Body of pancreas (tissue), 4 donors: ENCODE measurements at regions of chr3 and their contacts with region 1.

Region 1: GRCh38 chr3:17841190-17841828 is 98.9 kb upstream of the TBC1D5 start:
- DNase-seq: peak; percentile 63 to 76 (median 70)
- ATAC-seq: peak; percentile 83
- H3K4me3 ChIP-seq: no peak overlapping the region
- H3K27ac ChIP-seq: no peak overlapping the region
- H3K4me1 ChIP-seq: no peaks in the 10 kb centered on the region
- H3K27me3 ChIP-seq: no peaks in the 10 kb centered on the region
- CTCF ChIP-seq: peak; percentile 80 to 90 (median 87)
- POLR2A ChIP-seq: no peak

Region 2: GRCh38 chr3:17431004-17431403 is 410.3 kb before region 1 on chr3:
- intact Hi-C with region 1: loop called (anchors 10 kb)
- DNase-seq: no peak
- ATAC-seq: peak; percentile 67
- H3K4me3 ChIP-seq: no peak overlapping the region
- H3K27ac ChIP-seq: no peak overlapping the region
- H3K4me1 ChIP-seq: peaks cover 4% of the 10 kb centered on the region
- H3K27me3 ChIP-seq: no peaks in the 10 kb centered on the region
- CTCF ChIP-seq: peak in 6 of 7 experiments; percentile 26 to 56 (median 50)
- POLR2A ChIP-seq: no peak